GM18951 (cell line): ENCODE measurements at regions of chr3 and their contacts with region 1.

Region 1: GRCh38 chr3:181700168-181701087 is 11.3 kb upstream of the SOX2 start:
- POLR2A ChIP-seq: no peak

Region 2: DNA sequence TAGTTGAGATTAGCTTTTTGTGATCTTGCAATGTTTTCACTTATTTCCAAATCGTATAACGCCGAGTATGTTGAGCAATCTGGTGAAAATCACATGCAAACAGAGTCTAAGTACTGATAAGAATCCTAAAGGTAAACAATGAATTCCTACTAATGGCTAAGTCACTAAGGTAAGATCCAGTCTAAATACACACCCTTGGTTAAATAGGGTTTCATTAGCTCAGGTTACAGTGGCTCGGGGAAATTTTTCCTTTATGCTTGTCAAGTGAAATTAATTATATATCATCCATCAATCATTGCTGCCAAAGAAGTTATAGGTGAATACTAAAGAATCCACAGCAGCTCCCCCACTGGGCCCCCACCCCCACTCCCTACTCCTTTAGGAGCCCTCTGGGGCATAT is 150.6 kb after region 1 on chr3:
- in situ Hi-C with region 1: no loop called
- POLR2A ChIP-seq: no peak

Region 3: GRCh38 chr3:182258538-182259177 is 558.2 kb after region 1 on chr3:
- in situ Hi-C with region 1: no loop called
- POLR2A ChIP-seq: no peak

Region 4: GRCh38 chr3:182683453-182683852 is 983.0 kb after region 1 on chr3:
- in situ Hi-C with region 1: loop called (anchors 25 kb)
- POLR2A ChIP-seq: no peak